Left cardiac atrium (tissue), 4 donors: ENCODE measurements at regions of chr12 and their contacts with region 1.

Region 1: DNA sequence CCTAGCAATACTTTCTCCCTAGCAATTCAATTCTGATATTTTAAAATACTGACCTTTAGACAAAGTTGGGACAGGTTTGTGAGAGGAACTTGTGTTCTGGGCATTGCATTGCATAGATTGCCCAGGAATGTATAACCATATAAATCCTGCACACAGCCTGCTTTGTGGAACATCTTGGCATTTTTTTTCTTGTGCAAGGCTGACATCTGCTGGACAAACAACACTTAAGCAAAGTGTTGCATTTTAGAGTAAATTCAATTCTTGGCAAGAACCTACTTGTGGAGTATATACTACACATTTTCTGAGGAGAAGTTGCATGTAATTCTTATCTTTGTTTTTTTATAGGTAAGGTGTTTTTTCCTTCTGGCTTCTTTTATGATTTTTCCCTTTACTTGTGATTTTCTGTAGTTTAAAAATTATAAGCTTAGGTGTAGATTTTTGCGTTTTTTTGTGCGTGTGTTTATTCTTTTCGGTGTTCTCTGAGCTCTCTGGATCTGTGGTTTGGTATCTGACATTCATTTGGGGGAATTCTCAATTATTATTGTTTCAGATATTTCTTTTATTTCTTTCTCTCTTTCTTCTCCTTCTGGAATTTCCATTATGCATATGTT is 26.4 kb downstream of the TESPA1 start:
- DNase-seq: no peak
- ATAC-seq: peak; percentile 55 to 60

Region 2: DNA sequence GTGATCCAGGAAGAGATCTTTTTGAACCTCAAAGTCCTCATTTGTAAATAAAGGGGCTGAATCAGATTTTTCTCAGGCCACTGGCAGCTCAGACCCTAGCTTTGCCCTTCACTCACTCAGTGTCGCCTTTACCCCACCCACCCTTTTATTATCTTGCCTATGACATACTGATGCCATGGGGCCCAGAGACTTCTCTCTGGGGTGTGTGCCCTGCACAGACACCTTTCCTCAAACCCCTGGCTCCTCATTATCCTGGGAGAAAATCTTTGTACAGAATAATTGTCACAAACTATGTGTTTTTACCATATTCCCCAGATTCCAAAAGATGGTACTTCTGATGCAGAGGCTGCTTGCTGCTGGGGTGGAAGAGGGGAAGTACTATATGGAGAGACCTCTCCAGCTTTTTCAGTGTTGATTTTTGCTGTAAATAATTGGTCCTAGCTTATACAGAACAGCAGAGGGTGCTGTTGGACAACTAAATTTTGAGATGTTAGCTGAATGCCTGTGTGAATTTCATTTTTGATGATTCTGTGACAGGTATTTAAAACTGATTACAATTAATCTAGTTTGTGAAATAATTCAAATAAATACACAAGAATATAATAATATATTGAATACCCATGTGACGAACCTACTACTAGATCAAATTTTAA is 256.1 kb before region 1 on chr12:
- intact Hi-C with region 1: loop called in 1 of 2 experiments (anchors 5 kb)
- DNase-seq: no peak
- ATAC-seq: peak in 1 of 2 donors; percentile 47

Region 3: DNA sequence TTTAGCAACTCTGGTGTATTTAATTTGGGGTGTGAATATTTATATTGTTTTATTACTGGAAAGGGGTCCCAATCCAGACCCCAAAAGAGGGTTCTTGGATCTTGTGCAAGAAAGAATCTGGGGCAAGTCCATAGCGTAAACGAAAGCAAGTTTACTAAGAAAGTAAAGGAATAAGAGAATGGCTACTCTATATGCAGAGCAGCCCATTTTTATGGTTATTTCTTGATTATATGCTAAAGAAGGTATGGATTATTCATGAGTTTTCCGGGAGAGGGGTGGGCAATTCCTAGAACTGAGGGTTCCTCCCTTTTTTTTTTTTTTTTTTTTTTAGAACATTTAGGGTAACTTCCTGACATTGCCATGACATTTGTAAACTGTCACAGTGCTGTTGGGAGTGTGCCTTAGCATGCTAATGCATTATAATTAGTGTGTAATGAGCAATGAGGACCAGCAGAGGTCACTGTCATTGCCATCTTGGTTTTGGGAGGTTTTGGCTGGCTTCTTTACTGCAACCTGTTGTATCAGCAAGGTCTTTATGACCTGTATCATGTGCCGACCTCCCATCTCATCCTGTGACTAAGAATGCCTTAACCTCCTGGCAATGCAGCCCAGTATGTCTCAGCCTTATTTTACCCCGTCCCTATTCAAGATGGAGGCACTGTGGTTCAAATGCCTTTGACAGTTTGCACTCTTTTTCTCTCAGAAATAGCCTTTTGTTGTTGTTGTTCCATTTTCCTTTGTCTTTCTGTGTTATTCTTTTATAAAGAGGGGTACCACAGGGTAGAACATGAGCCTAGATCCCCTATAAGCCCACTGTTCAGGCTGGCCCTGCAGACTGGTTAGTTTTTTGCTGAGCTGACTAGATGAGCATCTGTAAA is 234.5 kb before region 1 on chr12:
- intact Hi-C with region 1: loop called in 1 of 2 experiments (anchors 10 kb)
- DNase-seq: no peak
- ATAC-seq: no peak

Region 4: GRCh38 chr12:54749191-54749818 is 208.8 kb before region 1 on chr12:
- intact Hi-C with region 1: loop called in 1 of 2 experiments (anchors 2 kb)
- DNase-seq: no peak
- ATAC-seq: peak; percentile 42 to 50

Region 5: DNA sequence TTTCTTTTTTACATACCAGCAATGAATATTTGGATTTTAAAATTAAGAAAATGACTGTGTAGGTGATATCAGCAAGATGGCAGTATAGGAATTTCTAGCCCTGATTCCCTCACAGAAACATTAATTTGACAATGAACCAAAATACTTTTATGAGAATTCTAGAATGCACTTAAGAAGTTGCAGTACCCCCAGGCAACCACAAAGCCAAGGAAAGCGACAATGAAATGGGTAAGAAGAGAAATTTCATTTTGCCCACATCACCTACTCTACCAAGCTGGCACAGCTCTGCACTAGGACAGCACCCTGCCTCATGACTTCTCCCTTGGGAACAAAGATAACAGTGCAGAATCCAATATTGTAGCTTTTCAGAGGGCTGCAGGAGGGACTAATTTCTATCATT is 174.7 kb after region 1 on chr12:
- intact Hi-C with region 1: no loop called
- DNase-seq: no peak
- ATAC-seq: no peak